ENCODE measurements at regions of chr7 and their contacts with region 1.

Region 1: DNA sequence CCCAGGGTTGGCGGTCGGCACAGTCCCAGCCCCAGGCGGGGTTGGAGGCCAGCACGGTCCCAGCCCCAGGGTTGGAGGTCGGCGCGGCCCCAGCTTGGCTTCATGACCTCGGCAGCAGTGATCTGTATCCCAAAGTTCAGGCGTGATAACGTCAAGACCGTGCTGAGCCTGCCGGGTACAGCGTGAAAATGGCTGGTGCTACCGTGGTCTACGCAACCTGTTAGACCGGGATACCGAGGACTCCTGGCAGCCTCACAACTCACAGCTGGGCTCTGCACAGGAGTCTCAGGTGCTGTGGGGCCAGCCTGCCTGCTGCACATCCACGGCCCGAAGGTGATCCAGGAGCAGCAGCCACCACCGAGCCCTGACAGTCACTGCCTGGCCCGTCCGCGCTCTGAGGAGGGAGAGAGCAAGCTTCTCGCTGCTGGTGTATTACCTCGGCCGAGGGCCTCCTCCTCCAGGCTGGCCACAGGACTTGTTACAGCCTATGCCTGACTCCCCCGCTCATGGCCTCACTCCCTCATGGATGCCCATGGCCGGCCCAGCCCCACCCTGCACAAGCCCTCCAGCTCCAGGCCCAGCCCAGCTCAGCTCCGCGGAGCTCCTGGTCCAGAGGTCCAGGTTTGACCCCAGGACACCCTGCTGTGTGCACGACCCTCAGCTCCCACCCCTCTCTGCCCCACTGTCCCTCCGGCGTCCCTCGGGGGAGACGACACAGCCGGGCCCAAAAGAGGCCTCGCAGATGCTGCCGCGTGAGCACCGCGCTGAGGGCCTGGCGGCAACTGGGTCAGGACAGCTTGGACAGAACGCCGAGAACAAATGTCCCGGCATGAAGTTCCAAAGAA is 156.0 kb downstream of the ELFN1 start:
- DNase-seq: peak in 2 of 5 donors; percentile 19 to 26
- H3K4me3 ChIP-seq: no peak overlapping the region
- H3K27ac ChIP-seq: no peak overlapping the region
- H3K4me1 ChIP-seq: no peaks in the 10 kb centered on the region
- H3K27me3 ChIP-seq: no peaks in the 10 kb centered on the region
- CTCF ChIP-seq: no peak
- EP300 ChIP-seq: no peak
- POLR2A ChIP-seq: no peak

Region 2: GRCh38 chr7:1725199-1725690 is 100.9 kb before region 1 on chr7:
- intact Hi-C with region 1: no loop called
- DNase-seq: no peak
- H3K4me3 ChIP-seq: no peak overlapping the region
- H3K27ac ChIP-seq: no peak overlapping the region
- H3K4me1 ChIP-seq: no peaks in the 10 kb centered on the region
- H3K27me3 ChIP-seq: no peaks in the 10 kb centered on the region
- CTCF ChIP-seq: no peak
- EP300 ChIP-seq: no peak
- POLR2A ChIP-seq: no peak

Region 3: DNA sequence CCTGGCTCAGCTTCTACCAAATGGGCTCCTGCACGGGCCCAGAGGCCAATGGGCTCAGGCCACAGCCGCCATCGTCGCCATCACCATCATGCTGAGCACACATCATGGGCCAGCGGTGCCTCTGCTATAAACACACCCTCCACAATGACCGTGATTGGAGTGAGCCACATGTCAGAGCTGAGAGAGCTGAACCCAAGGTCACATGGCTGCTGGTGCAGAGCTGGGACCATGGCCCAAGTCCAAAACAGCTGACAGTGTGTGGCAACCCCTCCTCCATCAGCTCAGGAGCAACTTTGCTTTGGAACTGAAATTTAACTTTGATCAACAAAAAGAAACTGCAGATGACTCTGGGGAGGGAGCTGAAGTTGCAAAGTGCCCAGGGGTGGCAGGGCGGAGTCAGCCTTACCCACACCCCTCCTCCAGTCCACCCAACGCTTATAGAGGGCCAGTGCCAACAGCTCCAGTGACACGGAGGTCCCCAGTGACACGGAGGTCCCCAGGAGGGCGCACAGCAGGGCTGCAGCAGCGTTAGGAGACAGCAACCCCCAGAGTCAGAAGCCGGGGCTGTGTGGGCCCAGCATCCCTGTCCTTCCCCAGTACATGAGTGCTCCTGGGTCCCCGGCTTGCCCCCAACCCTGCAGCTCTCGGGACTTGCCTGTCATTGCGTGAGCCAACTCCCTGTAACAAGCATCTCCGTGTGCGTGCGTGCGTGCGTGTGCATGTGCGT is 93.6 kb after region 1 on chr7:
- intact Hi-C with region 1: no loop called
- DNase-seq: no peak
- H3K4me3 ChIP-seq: no peak overlapping the region
- H3K27ac ChIP-seq: no peak overlapping the region
- H3K4me1 ChIP-seq: no peaks in the 10 kb centered on the region
- H3K27me3 ChIP-seq: no peaks in the 10 kb centered on the region
- CTCF ChIP-seq: no peak
- EP300 ChIP-seq: no peak
- POLR2A ChIP-seq: no peak

Region 4: GRCh38 chr7:2012981-2013380 is 186.9 kb after region 1 on chr7:
- intact Hi-C with region 1: loop called in 1 of 4 experiments (anchors 5 kb)
- DNase-seq: peak in 3 of 5 donors; percentile 9 to 40 (median 24)
- H3K4me3 ChIP-seq: no peak overlapping the region
- H3K27ac ChIP-seq: no peak overlapping the region
- H3K4me1 ChIP-seq: no peaks in the 10 kb centered on the region
- H3K27me3 ChIP-seq: no peaks in the 10 kb centered on the region
- CTCF ChIP-seq: no peak
- EP300 ChIP-seq: no peak
- POLR2A ChIP-seq: no peak